Activated CD8-positive, alpha-beta memory T cell treated with anti-CD3 and anti-CD28 coated beads, Interleukin-2, amount 10 ng/mL, durations not matched to agents 7 days and 5 days (primary cell): ENCODE measurements at regions of chr15 and their contacts with region 1.

Region 1: GRCh38 chr15:74046275-74046674 is 36.1 kb downstream of the GOLGA6A start:
- DNase-seq: no peak
- ATAC-seq: no peak
- H3K4me3 Mint-ChIP-seq: no peak overlapping the region
- H3K27ac Mint-ChIP-seq: no peak overlapping the region
- H3K4me1 Mint-ChIP-seq: peaks cover 12% of the 10 kb centered on the region
- H3K27me3 Mint-ChIP-seq: no peaks in the 10 kb centered on the region

Region 2: DNA sequence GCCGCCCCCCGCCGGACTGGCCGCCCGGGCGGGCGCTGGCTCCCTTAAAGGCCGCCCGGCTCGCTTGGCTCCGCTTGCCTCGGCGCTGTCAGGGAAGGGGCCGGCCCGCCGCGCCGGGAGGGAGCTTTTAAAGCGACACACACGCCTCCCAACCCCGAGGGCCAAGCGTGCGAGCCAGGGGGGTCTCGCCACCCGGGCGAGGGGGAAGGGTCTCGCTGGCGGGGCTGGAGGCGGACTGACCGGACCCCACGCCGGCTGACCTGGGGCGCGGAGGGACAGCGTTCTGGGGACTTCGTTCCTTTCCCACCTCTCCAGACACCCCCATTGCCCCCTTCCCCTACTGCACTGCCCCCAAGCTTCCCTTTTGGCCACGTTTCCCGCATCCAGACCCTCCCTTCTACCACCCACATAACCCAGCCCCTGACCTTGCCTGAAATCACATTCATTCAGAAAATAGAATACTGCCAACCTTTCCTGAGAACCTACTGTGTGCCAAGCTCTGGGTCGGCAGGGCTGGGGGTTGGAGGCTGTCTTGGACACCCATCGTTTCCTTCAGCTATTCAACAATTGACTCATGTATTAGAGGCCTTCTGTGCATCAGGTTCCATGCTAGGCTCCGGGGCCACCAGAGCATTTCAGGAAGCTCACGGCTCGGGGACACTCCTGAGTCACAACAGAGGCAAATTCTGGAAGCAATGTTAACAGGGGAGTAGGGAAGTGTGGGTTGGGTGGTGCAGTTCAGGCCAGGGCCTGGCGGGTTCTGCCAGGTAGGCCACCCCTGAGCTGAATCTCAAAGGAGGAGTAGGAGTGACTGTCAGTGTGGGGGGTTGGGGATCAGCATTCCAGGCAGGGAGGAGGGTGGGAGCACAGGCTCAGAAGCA is 292.8 kb before region 1 on chr15 and contains the start of gene INSYN1:
- CTCF ChIA-PET with region 1: no interaction called
- DNase-seq: no peak
- ATAC-seq: no peak
- H3K4me3 Mint-ChIP-seq: no peak within 1 kb of the TSS
- H3K27ac Mint-ChIP-seq: no peak within 1 kb of the TSS
- H3K4me1 Mint-ChIP-seq: no peaks in the 10 kb centered on the region
- H3K27me3 Mint-ChIP-seq: peaks cover 51% of the 10 kb centered on the region
- total RNA-seq, gene INSYN1: not detected

Region 3: GRCh38 chr15:73781038-73781925 is 265.0 kb before region 1 on chr15:
- CTCF ChIA-PET with region 1: no interaction called
- DNase-seq: no peak
- ATAC-seq: no peak
- H3K4me3 Mint-ChIP-seq: no peak overlapping the region
- H3K27ac Mint-ChIP-seq: no peak overlapping the region
- H3K4me1 Mint-ChIP-seq: no peaks in the 10 kb centered on the region
- H3K27me3 Mint-ChIP-seq: peaks cover 2% of the 10 kb centered on the region

Region 4: DNA sequence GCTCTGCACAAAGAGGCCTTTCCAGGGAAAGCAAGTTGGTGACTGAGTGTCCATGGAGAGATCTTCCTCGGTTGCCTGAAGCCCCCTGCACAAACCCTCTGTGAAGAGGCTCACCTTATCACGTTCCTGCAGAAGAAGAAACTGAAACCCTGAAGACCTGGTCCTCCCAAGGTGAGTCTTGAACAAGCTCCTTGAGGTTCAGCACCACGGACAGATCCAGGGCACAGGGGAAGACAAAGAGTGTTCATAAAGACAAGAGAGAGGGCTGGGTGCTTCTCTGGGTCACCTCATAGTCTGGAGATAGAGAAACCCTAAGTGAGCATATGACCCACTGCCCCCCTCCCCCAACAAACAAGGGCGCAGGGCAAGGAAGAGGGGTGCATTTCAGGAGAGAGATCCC is 194.6 kb before region 1 on chr15:
- CTCF ChIA-PET with region 1: no interaction called
- DNase-seq: peak; percentile 71
- ATAC-seq: no peak
- H3K4me3 Mint-ChIP-seq: no peak overlapping the region
- H3K27ac Mint-ChIP-seq: no peak overlapping the region
- H3K4me1 Mint-ChIP-seq: no peaks in the 10 kb centered on the region
- H3K27me3 Mint-ChIP-seq: peaks cover 38% of the 10 kb centered on the region

Region 5: DNA sequence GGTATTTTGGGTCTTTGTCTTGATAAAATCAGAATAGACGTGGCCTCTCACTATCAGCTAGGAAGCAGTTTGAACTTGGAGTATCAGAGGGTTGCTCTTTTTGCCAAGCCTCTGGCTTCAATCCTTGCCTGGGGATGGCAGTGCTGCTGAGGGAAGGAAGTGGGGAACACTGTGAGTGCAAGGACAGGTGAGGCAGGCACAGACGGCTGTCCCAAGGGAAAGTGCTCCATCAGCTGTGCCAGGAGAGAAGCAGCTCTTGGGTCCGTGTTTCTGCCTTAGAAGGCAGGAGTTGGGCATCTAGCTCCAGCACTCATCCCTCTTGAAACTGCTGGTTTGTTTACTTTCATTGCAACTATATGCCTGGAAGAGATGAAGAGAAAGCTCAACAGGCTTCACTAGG is 18.6 kb before region 1 on chr15:
- CTCF ChIA-PET with region 1: interaction called, 11 read pairs
- DNase-seq: no peak
- ATAC-seq: no peak
- H3K4me3 Mint-ChIP-seq: no peak overlapping the region
- H3K27ac Mint-ChIP-seq: no peak overlapping the region
- H3K4me1 Mint-ChIP-seq: no peaks in the 10 kb centered on the region
- H3K27me3 Mint-ChIP-seq: no peaks in the 10 kb centered on the region